Lower lobe of right lung (tissue), 2 donors: ENCODE measurements at regions of chr11 and their contacts with region 1.

Region 1: DNA sequence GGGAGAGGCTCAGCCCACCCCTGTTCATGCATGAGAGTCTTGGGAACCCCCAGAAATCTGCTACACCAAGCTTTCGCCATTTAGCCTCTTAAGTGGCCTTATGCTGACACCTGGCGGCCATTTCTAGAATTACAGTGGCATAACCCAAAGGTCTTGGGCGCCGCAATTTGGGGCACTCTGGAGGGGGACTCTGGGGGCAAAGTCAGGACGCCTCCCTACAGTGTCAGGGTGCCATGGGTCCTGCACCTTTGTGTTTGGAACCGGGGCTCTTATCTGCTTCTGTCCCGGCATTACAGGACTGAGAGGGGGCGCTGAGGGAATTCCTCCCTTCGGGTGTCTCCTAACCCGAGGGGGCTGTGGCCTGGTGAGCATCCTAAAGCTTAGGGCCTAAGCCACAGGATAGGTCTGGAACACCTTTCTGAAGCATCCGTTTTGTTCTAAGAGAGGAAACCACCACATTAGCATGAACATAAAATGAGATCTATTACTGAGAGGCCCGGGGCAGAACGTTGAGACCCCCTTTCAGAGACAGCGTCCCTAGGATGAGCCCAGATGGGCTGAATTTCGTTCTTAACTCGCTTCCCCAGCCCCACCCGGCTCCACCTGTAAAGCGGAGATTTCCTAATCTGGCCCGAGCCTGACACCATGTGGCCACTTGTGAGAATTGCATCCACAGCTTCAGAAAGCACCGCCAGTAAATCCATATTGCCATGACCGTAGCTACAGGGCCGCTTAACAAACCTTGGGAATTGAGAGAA is 9.3 kb downstream of the INS start:
- DNase-seq: peak; percentile 77
- ATAC-seq: peak; percentile 75 to 80
- H3K4me3 ChIP-seq: no peak overlapping the region
- H3K27ac ChIP-seq: no peak overlapping the region
- H3K4me1 ChIP-seq: peaks cover 8% of the 10 kb centered on the region
- H3K27me3 ChIP-seq: peaks cover 55% of the 10 kb centered on the region
- CTCF ChIP-seq: peak; percentile 76

Region 2: DNA sequence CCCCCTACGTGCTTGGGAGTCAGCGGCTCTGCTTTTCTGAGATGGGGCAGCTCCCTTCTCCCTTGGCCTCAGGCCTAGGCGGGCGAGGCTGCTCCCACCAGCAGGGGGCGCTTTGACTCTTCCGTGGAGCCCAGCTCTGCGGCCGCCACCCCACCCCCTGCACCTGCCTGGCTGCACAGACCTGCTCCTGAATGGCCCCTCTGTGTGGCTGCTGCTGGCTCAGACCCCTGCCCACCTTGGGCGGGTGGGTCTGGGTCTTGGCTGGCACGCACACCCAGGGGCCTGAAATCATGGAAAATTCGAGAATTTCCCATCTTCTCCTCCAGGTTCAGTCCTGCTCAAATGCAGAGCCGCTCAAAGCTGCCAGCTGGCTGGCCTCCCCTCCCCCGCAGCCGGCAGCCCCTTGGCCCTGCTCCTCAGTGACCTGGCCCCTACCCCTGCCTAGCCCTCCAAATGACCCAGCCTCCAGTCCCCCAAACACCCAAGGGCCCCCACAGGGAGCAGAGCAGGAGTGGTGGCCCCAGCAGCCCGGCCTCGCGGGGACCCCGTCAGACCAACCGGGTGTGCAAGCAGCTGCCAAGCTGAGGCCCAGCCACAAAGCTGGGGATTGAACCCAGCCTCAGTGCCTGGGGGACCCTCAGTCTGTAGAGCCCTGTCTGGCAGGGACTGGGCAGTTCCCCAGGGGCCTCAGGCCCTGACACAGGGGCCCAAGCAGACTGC is 269.0 kb before region 1 on chr11:
- intact Hi-C with region 1: loop called (anchors 5 kb)
- DNase-seq: peak; percentile 88
- ATAC-seq: peak; percentile 86 to 89
- H3K4me3 ChIP-seq: no peak overlapping the region
- H3K27ac ChIP-seq: no peak overlapping the region
- H3K4me1 ChIP-seq: peaks cover 18% of the 10 kb centered on the region
- H3K27me3 ChIP-seq: no peaks in the 10 kb centered on the region
- CTCF ChIP-seq: peak; percentile 91

Region 3: DNA sequence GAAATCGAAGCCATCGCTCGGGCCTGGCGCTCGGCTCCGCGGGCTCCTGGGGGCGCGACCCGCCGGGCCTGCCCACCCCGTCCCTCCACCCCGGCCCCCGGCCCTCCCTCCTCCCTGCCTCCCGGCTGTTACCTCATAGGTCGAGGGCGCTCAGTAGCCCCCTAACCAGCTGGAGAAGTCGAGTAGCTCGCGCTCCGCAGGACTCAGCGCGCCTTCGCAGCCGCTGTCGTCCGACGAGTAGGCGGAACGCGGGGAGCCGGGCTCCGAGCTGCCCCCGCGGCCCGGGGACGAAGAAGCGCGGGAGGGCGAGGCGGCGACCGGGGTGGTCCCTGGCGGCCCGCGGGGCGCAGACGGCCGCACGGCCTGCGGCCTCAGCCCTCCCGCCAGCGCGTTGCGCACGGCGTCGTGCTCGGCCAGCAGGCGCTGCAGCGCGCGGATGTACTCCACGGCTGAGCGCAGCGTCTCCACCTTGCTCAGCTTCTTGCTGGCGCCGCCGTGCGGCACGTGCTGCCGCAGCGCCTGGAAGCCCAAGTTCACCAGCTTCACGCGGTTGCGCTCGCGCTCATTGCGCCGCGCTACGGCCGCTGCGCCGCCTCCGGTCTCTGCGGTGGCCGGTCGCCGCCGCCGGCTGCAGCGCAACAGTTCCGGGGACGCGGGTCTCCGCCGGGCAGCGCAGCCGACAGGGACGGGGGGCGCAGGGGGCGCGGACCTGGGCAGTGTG is 118.1 kb after region 1 on chr11:
- intact Hi-C with region 1: no loop called
- DNase-seq: peak; percentile 76
- ATAC-seq: peak; percentile 47 to 52
- H3K4me3 ChIP-seq: peak overlapping the region; percentile 54
- H3K27ac ChIP-seq: peak overlapping the region; percentile 76
- H3K4me1 ChIP-seq: peaks cover 31% of the 10 kb centered on the region
- H3K27me3 ChIP-seq: peaks cover 53% of the 10 kb centered on the region
- CTCF ChIP-seq: peak; percentile 35